ENCODE measurements at regions of chr19 and their contacts with region 1.

Region 1: DNA sequence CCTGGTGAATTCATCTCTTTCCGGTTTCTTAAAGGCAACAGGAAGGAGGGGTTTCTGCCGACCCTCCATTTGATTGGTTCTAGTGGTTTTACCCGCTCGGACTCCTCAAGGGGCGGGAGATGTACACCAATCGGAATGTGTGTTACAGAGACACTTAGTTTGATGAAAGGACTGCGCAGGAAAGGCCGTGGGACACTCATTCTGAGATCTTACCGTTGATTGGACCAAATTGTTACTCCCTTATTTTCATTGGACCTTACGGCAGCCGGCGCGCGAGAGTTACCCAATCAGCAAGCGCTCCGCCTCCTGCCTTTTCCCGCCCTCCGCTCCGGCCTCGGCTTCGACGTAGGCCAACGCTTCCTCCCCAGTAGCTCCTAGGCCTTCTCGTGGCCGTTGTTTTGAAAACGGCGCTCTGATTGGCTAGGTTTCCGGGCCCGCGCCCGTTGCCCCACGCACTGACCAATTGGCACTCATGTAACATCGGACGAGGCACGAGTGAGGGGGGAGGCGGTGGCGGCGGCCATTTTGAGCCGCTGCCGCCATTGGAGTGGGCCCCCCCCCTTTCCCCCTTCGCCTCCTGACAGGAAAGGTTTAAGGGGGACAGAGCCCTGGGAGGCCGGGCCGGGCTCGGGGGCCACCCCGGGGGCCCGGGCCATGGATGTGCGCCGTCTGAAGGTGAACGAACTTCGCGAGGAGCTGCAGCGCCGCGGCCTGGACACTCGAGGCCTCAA is at the start of gene HNRNPUL1:
- DNase-seq: peak; percentile 93 to 100 (median 98)
- ATAC-seq: peak; percentile 83
- H3K4me3 ChIP-seq: peak within 1 kb of the TSS; percentile 94
- H3K27ac ChIP-seq: peak within 1 kb of the TSS; percentile 99
- H3K4me1 ChIP-seq: peaks cover 11 to 31% of the 10 kb centered on the region in 2 experiments; a peak in 4 of 5 replicates
- H3K27me3 ChIP-seq: peaks cover 0 to 11% of the 10 kb centered on the region in 2 experiments; a peak in 2 of 5 replicates
- CTCF ChIP-seq: peak; percentile 19 to 54 (median 37); a peak in 3 of 6 replicates
- EP300 ChIP-seq: no peak
- POLR2A ChIP-seq: peak; percentile 54
- RAD21 ChIP-seq: no peak
- polyA plus RNA-seq, gene HNRNPUL1: 7.3 to 9.4 TPM

Region 2: DNA sequence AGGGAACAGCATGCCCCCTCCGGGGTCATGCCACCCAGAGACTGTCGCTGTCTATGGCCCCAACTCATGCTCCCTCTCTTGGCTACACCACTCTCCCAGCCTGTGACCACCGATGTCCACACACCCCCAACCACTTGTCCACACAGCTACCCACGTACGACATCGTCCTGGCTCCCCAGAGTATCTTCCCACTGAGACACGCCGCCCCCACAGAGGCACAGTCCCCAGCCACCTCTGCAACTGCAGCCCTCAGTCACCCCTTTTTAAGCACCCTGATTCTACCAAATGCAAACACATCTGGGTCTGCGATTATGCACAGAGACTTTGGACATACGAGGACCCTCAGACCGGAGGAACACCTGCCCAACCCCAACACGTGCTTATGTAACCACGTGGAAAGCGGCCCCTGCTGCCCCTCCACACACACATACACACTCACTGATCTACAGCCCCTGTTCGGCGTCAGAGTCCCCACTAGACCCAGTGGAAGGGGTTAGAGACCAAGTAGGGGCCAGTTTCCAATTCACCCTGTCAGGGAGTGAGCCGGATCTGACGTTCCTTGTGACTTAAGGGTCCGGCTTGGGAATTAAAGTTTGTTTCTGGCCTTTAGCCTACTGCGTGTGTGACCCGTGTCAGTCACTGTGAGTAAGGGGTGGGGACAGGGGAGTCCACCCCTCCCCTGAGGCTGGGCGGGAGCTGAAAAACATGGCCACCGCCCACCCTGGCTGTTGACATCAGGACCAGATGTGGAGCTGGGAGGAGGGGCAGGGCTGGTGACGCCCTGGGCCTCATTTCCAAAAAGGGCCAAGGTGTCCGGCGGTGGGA is 56.9 kb before region 1 on chr19:
- CTCF ChIA-PET with region 1: interaction called, 25 read pairs
- POLR2A ChIA-PET with region 1: interaction called, 16 read pairs
- in situ Hi-C with region 1: loop called (anchors 5 kb)
- intact Hi-C with region 1: loop called (anchors 1 kb)
- DNase-seq: peak; percentile 77 to 86 (median 84)
- ATAC-seq: peak; percentile 92
- H3K4me3 ChIP-seq: no peak overlapping the region
- H3K27ac ChIP-seq: peak overlapping the region; percentile 52
- H3K4me1 ChIP-seq: peaks cover 10 to 15% of the 10 kb centered on the region in 2 experiments; a peak in 4 of 5 replicates
- H3K27me3 ChIP-seq: peaks cover 0 to 4% of the 10 kb centered on the region in 2 experiments; a peak in 2 of 5 replicates
- CTCF ChIP-seq: no peak
- EP300 ChIP-seq: no peak
- POLR2A ChIP-seq: no peak; the same call in 1 of the 2 replicates
- RAD21 ChIP-seq: no peak

Region 3: DNA sequence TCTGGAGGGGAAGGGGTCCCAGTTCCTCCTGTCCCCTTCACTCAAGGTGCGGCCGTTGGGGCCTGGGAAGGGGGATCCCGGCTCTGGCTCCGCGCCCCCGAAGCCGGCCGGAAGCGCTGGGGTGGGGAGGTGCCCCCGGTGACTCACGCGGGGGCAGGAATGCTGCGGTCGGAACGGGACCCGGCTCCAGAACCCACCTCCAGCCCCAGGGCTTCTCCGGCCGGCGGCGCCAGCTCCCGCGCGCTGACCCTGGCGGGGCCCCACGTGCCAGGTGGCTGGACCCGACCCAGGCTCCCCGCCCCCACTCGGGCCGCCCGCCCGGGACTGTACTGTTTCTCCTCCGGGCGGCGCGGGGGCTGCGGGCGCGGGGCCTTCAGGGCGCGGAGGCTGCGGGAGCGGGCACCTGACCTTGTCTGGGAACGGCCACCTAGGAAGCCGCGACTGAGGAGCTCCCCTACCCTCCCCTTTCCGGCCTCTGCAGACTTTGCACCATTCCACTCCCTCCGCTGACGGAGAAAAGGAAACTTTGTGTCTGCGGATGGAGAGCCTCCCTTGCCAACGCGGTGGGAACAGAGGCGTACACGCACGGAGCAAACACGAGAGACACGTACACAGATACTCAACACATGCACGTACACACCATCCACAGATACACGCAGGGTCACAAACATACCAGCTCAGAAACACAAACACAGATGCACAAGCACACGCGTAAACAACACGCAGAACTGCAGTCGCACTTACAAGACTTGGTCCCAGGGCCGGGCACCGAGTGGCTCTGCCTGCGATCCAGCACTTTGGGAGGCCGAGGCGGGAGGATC is 37.8 kb before region 1 on chr19:
- CTCF ChIA-PET with region 1: interaction called, 10 read pairs
- POLR2A ChIA-PET with region 1: interaction called, 10 read pairs
- in situ Hi-C with region 1: no loop called
- intact Hi-C with region 1: loop called (anchors 5 kb)
- DNase-seq: peak; percentile 76 to 93 (median 86)
- ATAC-seq: peak; percentile 82
- H3K4me3 ChIP-seq: peak overlapping the region; percentile 40
- H3K27ac ChIP-seq: peak overlapping the region; percentile 88
- H3K4me1 ChIP-seq: peaks cover 30 to 35% of the 10 kb centered on the region in 2 experiments
- H3K27me3 ChIP-seq: no peaks in the 10 kb centered on the region; a peak in 1 of 5 replicates
- CTCF ChIP-seq: peak in 1 of 3 experiments; percentile 10; a peak in 1 of 6 replicates
- EP300 ChIP-seq: no peak
- POLR2A ChIP-seq: no peak
- RAD21 ChIP-seq: no peak

Region 4: DNA sequence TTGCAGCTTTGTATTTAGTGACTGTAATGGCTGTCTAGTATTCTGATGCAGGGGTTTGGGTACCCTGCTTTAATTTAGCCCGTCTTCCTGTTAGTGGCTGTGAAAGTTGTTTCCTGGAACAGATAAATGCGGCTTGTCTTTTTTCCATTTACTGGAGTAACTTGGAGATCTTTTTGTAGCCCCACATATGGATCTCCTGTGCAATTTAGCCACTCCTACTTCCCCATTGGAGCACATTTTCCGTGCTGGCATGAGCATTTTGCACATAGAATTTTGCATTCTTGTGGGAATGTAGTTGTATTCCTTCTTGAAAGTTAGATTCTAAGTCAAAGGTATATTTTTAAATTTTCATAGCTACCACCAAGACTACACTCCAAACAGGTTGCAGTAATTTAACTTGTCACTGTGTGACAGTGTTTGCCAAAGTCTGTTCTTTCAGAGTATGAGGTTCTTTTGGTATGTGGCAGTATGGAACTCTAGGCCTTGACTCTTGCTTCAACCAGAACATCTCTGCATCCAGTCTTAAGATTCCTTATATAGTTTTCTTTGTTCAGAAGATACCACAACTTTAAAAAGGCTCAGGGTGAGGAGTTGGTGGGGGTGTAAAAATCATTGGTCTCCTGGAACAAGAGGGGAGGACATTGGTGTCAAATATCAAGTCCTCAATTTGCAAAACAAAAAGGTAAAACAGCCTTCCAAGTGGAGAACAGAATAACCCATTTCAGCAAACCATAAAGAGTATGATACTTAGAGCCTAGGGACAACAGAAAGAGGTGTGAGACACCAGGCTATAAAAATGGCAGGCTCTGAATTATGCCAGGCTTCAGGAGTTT is 24.9 kb after region 1 on chr19:
- CTCF ChIA-PET with region 1: no interaction called
- POLR2A ChIA-PET with region 1: interaction called, 11 read pairs
- in situ Hi-C with region 1: no loop called
- intact Hi-C with region 1: no loop called
- DNase-seq: no peak
- ATAC-seq: no peak
- H3K4me3 ChIP-seq: no peak overlapping the region
- H3K27ac ChIP-seq: no peak overlapping the region
- H3K4me1 ChIP-seq: no peaks in the 10 kb centered on the region
- H3K27me3 ChIP-seq: no peaks in the 10 kb centered on the region
- CTCF ChIP-seq: no peak
- EP300 ChIP-seq: no peak
- POLR2A ChIP-seq: no peak
- RAD21 ChIP-seq: no peak

Region 5: GRCh38 chr19:41439441-41440222 is 175.6 kb after region 1 on chr19 and contains the start of gene DMAC2:
- CTCF ChIA-PET with region 1: no interaction called
- POLR2A ChIA-PET with region 1: interaction called, 7 read pairs
- in situ Hi-C with region 1: no loop called
- intact Hi-C with region 1: loop called (anchors 2 kb)
- DNase-seq: peak; percentile 95 to 99 (median 97)
- ATAC-seq: peak; percentile 98
- H3K4me3 ChIP-seq: peak within 1 kb of the TSS; percentile 72
- H3K27ac ChIP-seq: peak within 1 kb of the TSS; percentile 95
- H3K4me1 ChIP-seq: peaks cover 6 to 23% of the 10 kb centered on the region in 2 experiments; a peak in 4 of 5 replicates
- H3K27me3 ChIP-seq: peaks cover 0 to 5% of the 10 kb centered on the region in 2 experiments; a peak in 2 of 5 replicates
- CTCF ChIP-seq: peak; percentile 79 to 85 (median 84)
- EP300 ChIP-seq: peak; percentile 62; the same call in 1 of the 2 replicates
- POLR2A ChIP-seq: peak; percentile 99
- RAD21 ChIP-seq: peak; percentile 37 to 57; a peak in 3 of 4 replicates
- polyA plus RNA-seq, gene DMAC2: 12.9 to 20.2 TPM